GM10248 (cell line): ENCODE measurements at regions of chr7 and their contacts with region 1.

Region 1: DNA sequence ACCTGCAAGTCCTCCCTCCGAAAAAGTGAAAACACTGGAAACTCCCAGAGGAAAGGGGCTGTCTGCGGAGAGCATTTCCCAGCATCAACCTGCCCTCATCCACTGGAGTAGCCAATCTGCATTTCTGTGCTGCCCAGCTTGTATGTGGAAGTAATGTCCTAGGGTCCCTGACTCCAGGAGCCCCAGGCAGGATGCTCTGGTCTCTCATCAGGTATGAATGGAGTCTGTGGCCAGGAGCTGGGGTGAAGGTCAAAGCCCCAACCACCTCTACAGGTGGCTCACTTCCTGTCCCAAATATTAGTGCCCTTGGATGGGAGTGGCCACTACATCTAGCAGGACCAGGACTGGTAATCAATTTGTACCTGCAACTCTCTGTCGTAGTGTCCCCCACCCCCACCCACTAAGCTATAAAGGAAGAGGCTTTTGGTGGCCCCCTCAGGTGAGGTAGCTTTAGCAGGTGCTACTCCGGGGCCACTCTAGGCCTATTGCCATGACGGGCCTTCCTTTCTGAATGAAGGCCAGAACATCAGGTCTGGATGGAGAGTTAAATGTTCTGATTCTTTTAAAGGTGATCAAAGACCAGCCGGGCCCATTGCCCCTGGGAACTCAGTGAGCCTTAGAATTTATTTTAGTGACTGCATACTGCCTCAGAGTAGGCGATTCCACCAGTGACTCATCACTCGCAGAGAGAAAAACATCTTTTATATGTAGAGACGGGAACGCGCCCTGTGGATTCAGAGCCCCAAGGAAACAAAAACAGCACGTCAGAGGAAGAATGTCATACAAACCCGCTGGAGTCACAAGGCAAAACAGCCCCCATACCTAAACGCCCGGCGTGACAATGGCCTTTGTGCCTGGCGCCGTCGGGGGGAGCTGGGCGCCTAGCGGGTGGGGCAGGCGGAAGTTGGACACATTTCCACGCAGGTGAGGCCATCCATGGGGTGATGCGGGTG is 13.0 kb downstream of the EN2 start:
- DNase-seq: no peak
- CTCF ChIP-seq: no peak

Region 2: GRCh38 chr7:155506854-155507337 is 35.9 kb after region 1 on chr7:
- CTCF ChIA-PET with region 1: interaction called, 10 read pairs
- POLR2A ChIA-PET with region 1: no interaction called
- DNase-seq: peak; percentile 11
- CTCF ChIP-seq: no peak